Adrenal gland (tissue), 19 donors: ENCODE measurements at regions of chr11 and their contacts with region 1.

Region 1: GRCh38 chr11:57644748-57645688 is 4.7 kb downstream of the YPEL4 start:
- DNase-seq: peak; percentile 78 to 93 (median 85)
- H3K4me3 ChIP-seq: no peak overlapping the region
- H3K27ac ChIP-seq: peak overlapping the region in 1 of 5 donors; percentile 0
- H3K4me1 ChIP-seq: peaks cover 0 to 29% of the 10 kb centered on the region in 2 donors
- H3K27me3 ChIP-seq: peaks cover 18% of the 10 kb centered on the region
- CTCF ChIP-seq: peak; percentile 64 to 91 (median 77)
- POLR2A ChIP-seq: no peak

Region 2: GRCh38 chr11:57345555-57346211 is 299.3 kb before region 1 on chr11:
- intact Hi-C with region 1: loop called (anchors 5 to 10 kb)
- DNase-seq: peak; percentile 67 to 91 (median 80)
- H3K4me3 ChIP-seq: no peak overlapping the region
- H3K27ac ChIP-seq: no peak overlapping the region
- H3K4me1 ChIP-seq: no peaks in the 10 kb centered on the region
- H3K27me3 ChIP-seq: no peaks in the 10 kb centered on the region
- CTCF ChIP-seq: peak; percentile 50 to 85 (median 74)
- POLR2A ChIP-seq: no peak

Region 3: GRCh38 chr11:57456960-57457642 is 187.9 kb before region 1 on chr11:
- intact Hi-C with region 1: loop called in 1 of 2 experiments (anchors 10 kb)
- DNase-seq: peak; percentile 88 to 96 (median 92)
- H3K4me3 ChIP-seq: no peak overlapping the region
- H3K27ac ChIP-seq: no peak overlapping the region
- H3K4me1 ChIP-seq: peaks cover 19 to 32% of the 10 kb centered on the region in 2 donors
- H3K27me3 ChIP-seq: peaks cover 26% of the 10 kb centered on the region
- CTCF ChIP-seq: peak; percentile 91 to 100 (median 96)
- POLR2A ChIP-seq: no peak

Region 4: GRCh38 chr11:57567515-57568329 is 77.3 kb before region 1 on chr11 and contains the start of gene UBE2L6:
- intact Hi-C with region 1: loop called (anchors 5 kb)
- DNase-seq: peak; percentile 52 to 85 (median 79)
- H3K4me3 ChIP-seq: peak within 1 kb of the TSS; percentile 59 to 98 (median 82)
- H3K27ac ChIP-seq: peak within 1 kb of the TSS; percentile 23 to 85 (median 75)
- H3K4me1 ChIP-seq: peaks cover 8 to 26% of the 10 kb centered on the region in 2 donors
- H3K27me3 ChIP-seq: no peaks in the 10 kb centered on the region
- CTCF ChIP-seq: peak in 1 of 6 experiments; percentile 85
- POLR2A ChIP-seq: peak in 1 of 2 donors; percentile 48
- total RNA-seq, gene UBE2L6: 34.4 to 108 (median 82.8) TPM

Region 5: GRCh38 chr11:57597916-57598830 is 46.8 kb before region 1 on chr11:
- intact Hi-C with region 1: loop called in 1 of 2 experiments (anchors 10 kb)
- DNase-seq: peak; percentile 38 to 72 (median 52)
- H3K4me3 ChIP-seq: peak overlapping the region in 3 of 4 donors; percentile 14 to 64 (median 56)
- H3K27ac ChIP-seq: peak overlapping the region in 4 of 5 donors; percentile 51 to 94 (median 66)
- H3K4me1 ChIP-seq: no peaks in the 10 kb centered on the region
- H3K27me3 ChIP-seq: no peaks in the 10 kb centered on the region
- CTCF ChIP-seq: no peak
- POLR2A ChIP-seq: no peak